AG04449 (cell line): ENCODE measurements at regions of chr11 and their contacts with region 1.

Region 1: GRCh38 chr11:73931039-73931645 is 19.7 kb upstream of the DNAJB13 start:
- DNase-seq: peak; percentile 29
- H3K4me3 ChIP-seq: no peak overlapping the region
- CTCF ChIP-seq: peak; percentile 49

Region 2: GRCh38 chr11:73942010-73942409 is 10.9 kb after region 1 on chr11:
- CTCF ChIA-PET with region 1: interaction called, 17 read pairs
- POLR2A ChIA-PET with region 1: no interaction called
- DNase-seq: no peak
- H3K4me3 ChIP-seq: no peak overlapping the region
- CTCF ChIP-seq: no peak

Region 3: GRCh38 chr11:74050465-74050864 is 119.3 kb after region 1 on chr11:
- CTCF ChIA-PET with region 1: no interaction called
- POLR2A ChIA-PET with region 1: no interaction called
- DNase-seq: no peak
- H3K4me3 ChIP-seq: no peak overlapping the region
- CTCF ChIP-seq: no peak